ENCODE measurements at regions of chr11 and their contacts with region 1.

Region 1: DNA sequence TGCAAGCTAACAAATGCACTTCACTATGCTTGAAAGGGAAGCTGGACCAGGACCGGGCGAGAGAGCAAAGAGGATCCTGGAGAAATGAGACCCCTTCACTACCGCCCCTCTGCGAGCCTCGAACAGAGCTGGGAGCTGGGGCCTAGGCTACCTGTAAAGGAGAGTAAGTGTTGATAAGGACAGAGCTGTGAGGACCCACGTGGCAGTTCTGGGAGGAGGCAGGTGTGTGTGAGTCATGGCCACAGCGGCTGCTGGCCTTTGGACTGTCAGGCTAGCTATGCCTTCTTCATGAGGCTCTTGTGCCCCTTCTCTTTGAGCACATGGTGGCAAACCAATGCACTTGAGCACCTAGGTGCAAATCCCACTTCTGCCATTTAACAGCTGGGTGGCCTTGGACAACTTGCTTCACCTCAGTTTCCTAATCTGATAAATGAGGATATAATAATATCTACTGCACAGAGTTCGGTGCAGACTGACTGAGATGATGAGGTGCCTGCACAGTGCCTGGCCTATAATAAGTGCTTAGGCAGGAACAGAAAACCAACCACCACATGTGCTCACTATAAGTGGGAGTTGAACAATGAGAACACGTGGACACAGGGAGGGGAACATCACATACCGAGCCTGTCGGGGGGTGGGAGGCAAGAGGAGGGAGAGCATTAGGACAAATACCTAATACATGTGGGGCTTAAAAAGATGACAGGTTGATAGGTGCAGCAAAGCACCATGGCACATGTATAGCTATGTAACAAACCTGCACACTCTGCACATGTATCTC is 35.3 kb upstream of the KCNJ11 start:
- DNase-seq: no peak
- H3K4me3 ChIP-seq: no peak overlapping the region
- H3K27ac ChIP-seq: no peak overlapping the region
- H3K4me1 ChIP-seq: peaks cover 0 to 5% of the 10 kb centered on the region in 2 experiments; a peak in 1 of 4 replicates
- H3K27me3 ChIP-seq: peaks cover 10% of the 10 kb centered on the region; the same call in 1 of the 2 replicates
- CTCF ChIP-seq: no peak
- EP300 ChIP-seq: no peak
- RAD21 ChIP-seq: no peak

Region 2: DNA sequence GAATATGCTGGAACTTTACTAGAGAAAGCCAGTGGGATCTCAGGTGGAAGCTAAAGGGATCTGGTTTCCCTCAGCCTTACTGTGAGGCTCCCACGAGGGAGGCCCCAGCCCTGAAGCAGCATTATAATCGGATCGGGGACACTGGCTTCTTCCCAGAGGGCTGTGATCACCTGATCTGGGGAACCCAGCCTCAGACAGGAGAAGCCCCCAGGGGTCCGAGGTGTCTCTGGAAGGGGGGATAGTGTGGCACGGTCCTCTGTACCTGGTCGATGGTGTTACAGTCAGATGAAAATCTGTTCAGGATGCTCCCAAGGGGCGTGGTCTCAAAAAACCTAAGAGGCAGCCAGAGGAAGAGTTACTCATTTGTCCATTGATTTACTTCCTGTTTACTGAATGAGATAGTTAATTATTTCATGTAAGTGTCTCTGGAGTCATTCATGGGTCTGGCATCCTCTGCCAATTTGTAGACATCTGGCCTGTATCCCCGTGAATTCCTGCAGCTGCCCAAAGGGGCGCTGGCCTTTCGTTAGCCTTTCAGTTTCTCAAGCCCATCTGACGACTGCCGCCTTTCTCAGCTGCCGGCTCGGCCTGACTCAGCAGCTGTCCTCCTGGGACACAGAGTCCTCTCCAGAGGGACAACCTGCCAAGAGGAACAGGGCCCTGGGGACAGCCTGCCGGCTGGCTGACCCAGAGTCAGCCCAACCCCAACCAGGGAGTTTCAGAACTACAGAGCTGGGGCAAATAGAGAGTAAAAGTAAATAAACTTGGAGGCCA is 18.3 kb before region 1 on chr11:
- CTCF ChIA-PET with region 1: interaction called, 10 read pairs
- POLR2A ChIA-PET with region 1: no interaction called
- DNase-seq: peak; percentile 78
- H3K4me3 ChIP-seq: no peak overlapping the region
- H3K27ac ChIP-seq: peak overlapping the region in 1 of 2 experiments; percentile 43; a peak in 1 of 4 replicates
- H3K4me1 ChIP-seq: peaks cover 0 to 16% of the 10 kb centered on the region in 2 experiments; a peak in 1 of 4 replicates
- H3K27me3 ChIP-seq: no peaks in the 10 kb centered on the region
- CTCF ChIP-seq: peak; percentile 27; the same call in 1 of the 2 replicates
- EP300 ChIP-seq: no peak; a peak in 1 of 4 replicates
- RAD21 ChIP-seq: 0 out of 2 replicates have a peak, but pooled peaks have one; percentile 20

Region 3: DNA sequence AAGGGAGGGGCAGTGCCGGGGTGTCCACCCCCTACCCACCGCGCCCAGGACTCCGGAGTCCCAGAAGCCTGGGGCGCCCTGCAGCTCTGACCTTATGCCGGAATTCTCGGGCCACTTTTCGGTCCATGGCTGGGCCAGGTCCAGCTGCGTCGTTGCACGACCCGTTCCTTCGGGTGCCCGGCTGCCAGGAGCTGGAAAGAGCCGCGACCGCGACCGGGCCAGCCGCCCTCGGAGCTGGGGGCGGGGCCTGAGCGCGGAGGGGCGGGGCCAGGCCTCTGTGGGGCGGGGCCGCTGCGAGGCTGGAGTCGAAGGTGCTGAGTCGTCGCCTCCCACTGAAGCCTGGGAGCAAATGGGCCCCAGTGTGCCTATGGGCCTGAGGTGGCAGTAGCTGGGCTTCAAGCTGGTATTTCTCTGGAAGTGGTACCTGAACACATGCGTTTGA is 120.5 kb after region 1 on chr11 and contains the start of gene USH1C:
- CTCF ChIA-PET with region 1: no interaction called
- POLR2A ChIA-PET with region 1: no interaction called
- DNase-seq: peak; percentile 76
- H3K4me3 ChIP-seq: no peak within 1 kb of the TSS
- H3K27ac ChIP-seq: no peak within 1 kb of the TSS
- H3K4me1 ChIP-seq: no peaks in the 10 kb centered on the region; a peak in 1 of 4 replicates
- H3K27me3 ChIP-seq: no peaks in the 10 kb centered on the region; the same call in 1 of the 2 replicates
- CTCF ChIP-seq: no peak
- EP300 ChIP-seq: no peak
- RAD21 ChIP-seq: no peak
- polyA plus RNA-seq, gene USH1C: not detected in 2 replicates